ENCODE measurements at regions of chr9 and their contacts with region 1.

Region 1: DNA sequence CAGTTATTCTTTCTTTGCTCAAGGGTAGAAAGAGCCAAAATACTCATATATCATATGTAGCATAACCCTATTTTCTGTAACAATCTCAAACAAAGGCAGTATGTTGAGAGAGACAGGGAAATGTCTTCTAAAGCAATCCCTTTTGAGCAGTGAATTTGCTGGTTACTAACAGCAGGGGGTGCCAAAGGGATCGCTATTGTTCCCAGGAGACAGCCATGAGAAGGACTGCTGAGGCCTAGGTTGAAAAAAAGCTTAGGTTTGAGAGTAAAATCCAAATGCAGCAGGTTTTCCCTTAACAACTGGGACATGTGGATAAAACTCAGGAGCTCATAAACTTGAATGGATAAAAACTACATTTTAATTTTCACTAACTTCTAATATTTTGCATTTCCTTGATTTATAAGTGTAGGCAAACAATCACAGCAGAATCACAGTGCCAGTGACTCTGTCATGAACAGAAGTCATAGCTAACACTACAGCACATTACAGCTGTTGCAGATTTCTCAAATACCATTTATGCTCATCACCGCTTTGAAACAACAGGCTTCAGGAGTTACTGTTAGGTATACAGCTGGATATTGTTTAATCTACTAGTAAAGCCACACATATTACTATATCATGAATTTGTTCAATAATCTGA is 148.4 kb downstream of the MAPKAP1 start:
- DNase-seq: peak; percentile 54
- H3K4me3 ChIP-seq: no peak overlapping the region
- H3K27ac ChIP-seq: no peak overlapping the region
- H3K4me1 ChIP-seq: no peaks in the 10 kb centered on the region
- H3K27me3 ChIP-seq: no peaks in the 10 kb centered on the region
- CTCF ChIP-seq: peak; percentile 81 to 82

Region 2: DNA sequence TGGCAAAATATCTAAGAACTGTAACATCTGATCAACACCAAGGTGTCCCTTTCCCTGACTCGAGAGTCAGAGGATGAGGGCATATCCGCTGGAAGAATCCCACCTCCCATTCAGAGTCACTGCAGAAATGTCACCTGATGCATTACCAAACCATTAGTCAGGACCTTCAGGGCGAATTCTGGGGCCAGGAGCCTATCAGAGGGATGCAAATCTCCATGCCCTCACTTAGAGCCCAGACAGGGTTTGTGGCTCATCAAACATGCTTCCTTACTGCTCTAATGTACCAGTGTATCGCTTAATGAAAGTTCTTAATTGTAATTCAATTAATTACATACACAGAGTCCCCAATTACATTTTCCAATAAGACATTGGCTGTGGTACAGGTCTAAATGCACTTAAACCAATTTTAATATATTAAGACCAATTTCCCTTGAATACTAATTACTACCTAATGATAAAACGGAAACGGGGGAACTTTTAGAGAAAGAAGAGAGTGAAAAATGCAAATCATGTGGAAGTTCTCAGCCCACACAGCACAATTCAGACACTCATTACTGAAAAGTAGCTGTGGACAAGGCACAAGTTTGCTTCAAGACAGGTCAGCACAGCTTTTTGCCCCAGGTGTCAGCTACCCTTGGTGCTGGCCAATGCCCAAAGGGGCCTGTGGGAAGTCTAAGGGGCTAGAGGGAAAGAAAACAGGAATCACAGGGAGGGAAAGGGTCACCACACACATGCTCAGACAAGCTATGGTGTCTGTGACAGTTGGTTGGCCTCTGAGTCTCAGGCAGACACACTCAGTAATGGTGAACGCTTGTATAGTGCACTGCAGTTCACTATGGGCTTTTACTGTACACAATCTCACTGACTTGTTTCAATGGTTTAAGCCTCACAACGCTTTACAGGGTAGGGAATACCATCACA is 63.1 kb before region 1 on chr9:
- CTCF ChIA-PET with region 1: no interaction called
- dilution Hi-C with region 1: no loop called
- in situ Hi-C with region 1: no loop called
- intact Hi-C with region 1: no loop called
- DNase-seq: peak; percentile 76
- H3K4me3 ChIP-seq: no peak overlapping the region
- H3K27ac ChIP-seq: no peak overlapping the region
- H3K4me1 ChIP-seq: peaks cover 18% of the 10 kb centered on the region
- H3K27me3 ChIP-seq: no peaks in the 10 kb centered on the region
- CTCF ChIP-seq: no peak

Region 3: GRCh38 chr9:125626187-125626586 is 67.6 kb after region 1 on chr9:
- CTCF ChIA-PET with region 1: no interaction called
- dilution Hi-C with region 1: loop called (anchors 5 kb)
- in situ Hi-C with region 1: no loop called
- intact Hi-C with region 1: loop called (anchors 1 kb)
- DNase-seq: no peak
- H3K4me3 ChIP-seq: no peak overlapping the region
- H3K27ac ChIP-seq: no peak overlapping the region
- H3K4me1 ChIP-seq: peaks cover 12% of the 10 kb centered on the region
- H3K27me3 ChIP-seq: no peaks in the 10 kb centered on the region
- CTCF ChIP-seq: no peak

Region 4: DNA sequence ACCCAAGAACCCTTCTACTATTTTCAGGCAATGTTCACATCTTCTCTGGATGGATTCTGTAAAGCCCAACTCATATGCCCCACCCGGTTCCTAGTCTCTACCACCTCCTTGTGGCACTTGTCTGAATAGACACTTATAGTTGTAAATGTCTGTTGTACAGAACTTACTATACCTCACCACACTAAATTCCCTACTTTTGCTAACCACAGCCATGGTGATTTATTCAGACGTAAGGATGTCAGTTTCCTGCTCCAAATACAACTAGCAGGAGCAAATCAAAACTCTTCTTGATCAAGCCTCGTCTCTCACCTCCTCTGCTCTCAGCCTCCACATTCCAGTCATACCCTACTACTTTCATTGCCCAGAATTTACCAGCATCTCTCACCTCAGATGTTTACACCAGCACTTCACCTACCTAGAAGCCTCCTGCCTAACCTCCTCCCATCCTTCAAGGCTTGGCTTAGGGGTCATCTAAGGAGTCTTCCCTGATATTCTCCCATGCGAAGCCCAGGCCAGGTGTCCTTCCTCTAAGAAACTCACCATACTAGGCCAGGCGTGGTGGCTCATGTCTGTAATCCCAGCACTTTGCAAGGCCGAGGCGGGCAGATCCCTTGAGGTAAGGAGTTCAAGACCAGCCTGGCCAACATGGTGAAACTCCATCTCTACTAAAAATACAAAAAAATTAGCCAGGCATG is 73.0 kb after region 1 on chr9:
- CTCF ChIA-PET with region 1: interaction called, 4 read pairs
- dilution Hi-C with region 1: loop called (anchors 5 kb)
- in situ Hi-C with region 1: no loop called
- intact Hi-C with region 1: loop called (anchors 1 kb)
- DNase-seq: peak; percentile 42
- H3K4me3 ChIP-seq: no peak overlapping the region
- H3K27ac ChIP-seq: peak overlapping the region; percentile 14
- H3K4me1 ChIP-seq: peaks cover 47% of the 10 kb centered on the region
- H3K27me3 ChIP-seq: no peaks in the 10 kb centered on the region
- CTCF ChIP-seq: peak; percentile 44 to 53

Region 5: GRCh38 chr9:125706661-125707471 is 148.3 kb after region 1 on chr9 and contains the start of gene MAPKAP1:
- CTCF ChIA-PET with region 1: no interaction called
- dilution Hi-C with region 1: no loop called
- in situ Hi-C with region 1: no loop called
- intact Hi-C with region 1: loop called (anchors 5 kb)
- DNase-seq: peak; percentile 97
- H3K4me3 ChIP-seq: peak within 1 kb of the TSS; percentile 78 to 88 (median 84)
- H3K27ac ChIP-seq: peak within 1 kb of the TSS; percentile 67
- H3K4me1 ChIP-seq: peaks cover 19% of the 10 kb centered on the region
- H3K27me3 ChIP-seq: no peaks in the 10 kb centered on the region
- CTCF ChIP-seq: no peak
- total RNA-seq, gene MAPKAP1: 81.4 to 104 TPM

Region 6: GRCh38 chr9:125961072-125961471 is 402.5 kb after region 1 on chr9:
- CTCF ChIA-PET with region 1: no interaction called
- dilution Hi-C with region 1: no loop called
- in situ Hi-C with region 1: no loop called
- intact Hi-C with region 1: loop called (anchors 10 kb)
- DNase-seq: no peak
- H3K4me3 ChIP-seq: no peak overlapping the region
- H3K27ac ChIP-seq: no peak overlapping the region
- H3K4me1 ChIP-seq: no peaks in the 10 kb centered on the region
- H3K27me3 ChIP-seq: no peaks in the 10 kb centered on the region
- CTCF ChIP-seq: no peak

Region 7: DNA sequence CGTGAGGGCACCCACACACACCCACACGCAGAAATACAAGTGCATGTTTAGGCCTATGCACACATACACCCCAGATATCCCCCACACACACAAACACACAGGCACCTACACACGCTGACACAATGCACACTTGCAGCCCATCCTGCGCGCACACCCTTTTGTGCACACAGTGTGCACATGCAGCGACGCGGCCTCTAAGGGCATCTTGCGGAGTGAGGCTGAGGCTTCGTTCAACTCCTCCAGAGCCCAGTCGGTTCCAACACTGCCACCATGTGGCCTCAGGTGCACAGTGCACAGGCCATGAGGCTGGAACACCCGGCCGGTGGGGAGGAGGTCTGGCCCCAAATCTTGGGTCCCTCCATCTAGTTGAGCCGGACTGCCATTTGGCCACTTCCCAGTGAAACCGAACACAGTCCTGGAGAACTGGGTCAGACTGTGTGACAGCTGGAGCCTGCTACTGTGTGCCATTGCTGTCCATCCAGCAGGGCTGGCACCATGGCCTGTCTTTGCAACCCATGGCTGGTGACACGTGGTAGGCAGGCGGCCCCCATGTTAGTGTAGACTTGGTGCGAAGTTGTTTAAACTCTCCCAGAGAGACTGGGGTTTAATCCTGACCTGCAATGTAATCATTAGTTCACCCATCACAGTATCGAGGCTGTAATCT is 670.3 kb after region 1 on chr9:
- CTCF ChIA-PET with region 1: no interaction called
- dilution Hi-C with region 1: no loop called
- in situ Hi-C with region 1: loop called (anchors 10 to 25 kb)
- intact Hi-C with region 1: loop called (anchors 1 kb)
- DNase-seq: peak; percentile 45
- H3K4me3 ChIP-seq: no peak overlapping the region
- H3K27ac ChIP-seq: no peak overlapping the region
- H3K4me1 ChIP-seq: no peaks in the 10 kb centered on the region
- H3K27me3 ChIP-seq: no peaks in the 10 kb centered on the region
- CTCF ChIP-seq: peak; percentile 97 to 98

Region 8: GRCh38 chr9:126398403-126399058 is 840.0 kb after region 1 on chr9:
- CTCF ChIA-PET with region 1: no interaction called
- dilution Hi-C with region 1: no loop called
- in situ Hi-C with region 1: no loop called
- intact Hi-C with region 1: loop called (anchors 10 kb)
- DNase-seq: peak; percentile 46
- H3K4me3 ChIP-seq: no peak overlapping the region
- H3K27ac ChIP-seq: no peak overlapping the region
- H3K4me1 ChIP-seq: peaks cover 13% of the 10 kb centered on the region
- H3K27me3 ChIP-seq: no peaks in the 10 kb centered on the region
- CTCF ChIP-seq: peak; percentile 93 to 100

Measured in mammary epithelial cell (primary cell).